ENCODE measurements at regions of chr15 and their contacts with region 1.

Region 1: GRCh38 chr15:76905013-76905839 is at the start of gene SCAPER:
- DNase-seq: peak; percentile 95 to 97
- H3K4me3 ChIP-seq: peak within 1 kb of the TSS; percentile 86 to 100
- H3K27ac ChIP-seq: peak within 1 kb of the TSS; percentile 99
- H3K4me1 ChIP-seq: peaks cover 32% of the 10 kb centered on the region
- H3K27me3 ChIP-seq: no peaks in the 10 kb centered on the region
- CTCF ChIP-seq: peak in 2 of 3 experiments; percentile 5 to 33
- POLR2A ChIP-seq: peak; percentile 5 to 55
- total RNA-seq, gene SCAPER: 51.3 TPM

Region 2: GRCh38 chr15:76815401-76815800 is 89.8 kb before region 1 on chr15:
- intact Hi-C with region 1: no loop called
- DNase-seq: no peak
- H3K4me3 ChIP-seq: no peak overlapping the region
- H3K27ac ChIP-seq: no peak overlapping the region
- H3K4me1 ChIP-seq: no peaks in the 10 kb centered on the region
- H3K27me3 ChIP-seq: no peaks in the 10 kb centered on the region
- CTCF ChIP-seq: no peak
- POLR2A ChIP-seq: no peak

Region 3: DNA sequence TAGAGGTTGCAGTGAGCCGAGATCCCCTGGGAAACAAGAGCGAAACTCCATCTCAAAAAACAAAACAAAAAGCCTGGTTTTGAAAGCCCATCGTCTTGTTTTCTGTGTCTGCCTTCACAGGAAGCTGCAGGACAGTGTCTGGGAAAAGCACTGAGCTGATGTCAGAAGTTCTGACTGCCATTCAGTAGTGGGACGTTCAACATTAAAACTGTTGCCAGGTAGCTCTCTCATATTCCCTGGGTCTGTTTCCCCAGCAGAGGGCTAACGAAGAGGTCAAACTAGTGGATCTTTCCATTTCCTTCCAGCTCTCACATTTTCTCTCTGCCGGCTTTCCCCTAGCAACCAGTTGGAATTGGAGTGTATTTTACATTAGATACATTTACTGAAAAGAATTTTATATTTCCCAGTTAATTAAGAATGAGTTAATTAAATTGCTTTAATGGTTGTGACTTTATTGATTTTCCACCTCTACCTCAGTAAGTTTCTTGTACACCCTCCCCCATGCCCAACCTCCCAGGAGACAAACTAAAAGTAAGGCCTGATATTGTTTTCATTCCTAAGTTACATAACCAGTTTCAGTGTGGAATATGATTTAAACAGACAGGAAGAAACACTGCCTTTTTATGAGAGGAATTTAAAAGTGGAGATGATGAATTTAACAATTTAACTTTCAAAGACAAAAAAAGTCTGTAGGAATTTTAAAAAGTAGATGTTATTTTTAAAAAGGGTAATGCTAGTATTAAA is 56.2 kb after region 1 on chr15:
- intact Hi-C with region 1: loop called (anchors 2 kb)
- DNase-seq: no peak
- H3K4me3 ChIP-seq: no peak overlapping the region
- H3K27ac ChIP-seq: no peak overlapping the region
- H3K4me1 ChIP-seq: no peaks in the 10 kb centered on the region
- H3K27me3 ChIP-seq: no peaks in the 10 kb centered on the region
- CTCF ChIP-seq: no peak
- POLR2A ChIP-seq: no peak